ENCODE measurements at regions of chr18 and their contacts with region 1.

Region 1: GRCh38 chr18:24987303-24988252 is 364.4 kb downstream of the ZNF521 start:
- DNase-seq: peak; percentile 64 to 89
- ATAC-seq: peak; percentile 88 to 93 (median 88)
- H3K4me3 ChIP-seq: peak overlapping the region; percentile 54
- H3K27ac ChIP-seq: peak overlapping the region; percentile 86
- H3K4me1 ChIP-seq: peaks cover 73% of the 10 kb centered on the region
- H3K27me3 ChIP-seq: no peaks in the 10 kb centered on the region
- CTCF ChIP-seq: no peak

Region 2: DNA sequence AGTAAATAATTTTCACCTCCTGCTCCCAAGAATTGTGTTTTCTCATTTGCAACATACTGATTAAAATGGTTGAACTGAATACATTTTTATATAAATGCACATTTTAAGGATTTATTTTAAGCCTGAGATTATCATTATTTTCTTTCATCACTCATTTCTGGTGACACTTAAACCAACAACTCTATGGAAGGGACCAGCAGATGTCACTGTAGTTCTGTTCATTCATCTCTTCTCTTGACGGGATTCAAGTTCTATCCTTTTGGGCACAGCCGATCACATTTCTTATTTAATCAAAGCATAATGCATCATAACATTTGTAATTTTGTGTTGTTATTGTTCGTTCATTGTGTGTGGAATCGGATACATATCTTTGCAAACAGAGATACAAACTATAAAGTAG is 109.3 kb before region 1 on chr18:
- intact Hi-C with region 1: no loop called
- DNase-seq: no peak
- ATAC-seq: peak in 3 of 4 donors; percentile 62 to 80 (median 68)
- H3K4me3 ChIP-seq: no peak overlapping the region
- H3K27ac ChIP-seq: no peak overlapping the region
- H3K4me1 ChIP-seq: no peaks in the 10 kb centered on the region
- H3K27me3 ChIP-seq: no peaks in the 10 kb centered on the region
- CTCF ChIP-seq: peak; percentile 72

Region 3: DNA sequence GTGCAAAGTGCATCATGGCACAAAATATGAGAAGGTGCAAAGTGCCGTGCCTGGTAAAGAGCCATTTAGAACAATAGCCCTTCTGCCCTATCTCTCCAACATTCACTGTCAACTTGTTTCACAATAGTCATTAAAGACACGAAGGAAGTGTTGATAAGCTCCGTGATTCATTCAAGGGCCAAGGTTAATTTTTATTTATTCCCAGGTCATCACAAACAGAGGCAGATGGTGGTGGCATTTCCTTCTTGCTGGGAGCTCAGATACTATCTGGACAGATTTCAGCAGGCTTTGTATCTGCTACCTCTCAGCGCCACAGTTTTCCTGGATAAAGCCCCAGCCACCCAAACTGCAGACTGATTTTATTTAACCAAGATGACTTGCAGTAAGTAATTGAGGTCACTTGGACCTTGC is 55.1 kb after region 1 on chr18:
- intact Hi-C with region 1: no loop called
- DNase-seq: no peak
- ATAC-seq: peak in 2 of 4 donors; percentile 80 to 82
- H3K4me3 ChIP-seq: no peak overlapping the region
- H3K27ac ChIP-seq: no peak overlapping the region
- H3K4me1 ChIP-seq: peaks cover 5% of the 10 kb centered on the region
- H3K27me3 ChIP-seq: no peaks in the 10 kb centered on the region
- CTCF ChIP-seq: no peak

Region 4: DNA sequence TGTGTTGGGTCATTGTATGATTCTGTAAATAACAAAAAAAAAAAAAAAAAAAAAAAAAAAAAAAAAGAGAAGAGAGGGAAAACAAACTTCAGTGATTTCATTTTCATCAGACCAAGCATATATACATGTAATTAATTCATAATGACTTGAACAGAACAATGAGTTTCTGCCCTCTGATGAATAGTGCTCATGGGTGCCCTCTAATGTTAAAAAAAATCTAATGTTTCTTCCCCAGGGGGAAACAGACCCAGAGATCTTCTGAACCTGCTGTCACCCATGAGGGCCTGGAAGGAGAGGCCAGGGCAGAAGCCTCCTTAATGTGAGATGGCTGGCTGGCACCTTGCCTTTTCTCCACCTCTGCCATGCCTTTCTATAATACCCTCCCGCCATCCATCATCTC is 75.1 kb after region 1 on chr18:
- intact Hi-C with region 1: loop called in 1 of 2 experiments (anchors 5 kb)
- DNase-seq: no peak
- ATAC-seq: peak in 1 of 4 donors; percentile 58
- H3K4me3 ChIP-seq: no peak overlapping the region
- H3K27ac ChIP-seq: no peak overlapping the region
- H3K4me1 ChIP-seq: no peaks in the 10 kb centered on the region
- H3K27me3 ChIP-seq: no peaks in the 10 kb centered on the region
- CTCF ChIP-seq: no peak

Region 5: GRCh38 chr18:25136416-25137196 is 149.0 kb after region 1 on chr18:
- intact Hi-C with region 1: loop called in 1 of 2 experiments (anchors 10 kb)
- DNase-seq: no peak
- ATAC-seq: peak in 2 of 4 donors; percentile 10 to 45
- H3K4me3 ChIP-seq: no peak overlapping the region
- H3K27ac ChIP-seq: no peak overlapping the region
- H3K4me1 ChIP-seq: peaks cover 35% of the 10 kb centered on the region
- H3K27me3 ChIP-seq: no peaks in the 10 kb centered on the region
- CTCF ChIP-seq: no peak

Region 6: GRCh38 chr18:25230658-25231326 is 243.2 kb after region 1 on chr18:
- intact Hi-C with region 1: loop called (anchors 5 to 10 kb)
- DNase-seq: peak; percentile 76 to 81
- ATAC-seq: peak; percentile 81 to 95 (median 90)
- H3K4me3 ChIP-seq: peak overlapping the region; percentile 41
- H3K27ac ChIP-seq: peak overlapping the region; percentile 72
- H3K4me1 ChIP-seq: peaks cover 24% of the 10 kb centered on the region
- H3K27me3 ChIP-seq: no peaks in the 10 kb centered on the region
- CTCF ChIP-seq: no peak

Region 7: DNA sequence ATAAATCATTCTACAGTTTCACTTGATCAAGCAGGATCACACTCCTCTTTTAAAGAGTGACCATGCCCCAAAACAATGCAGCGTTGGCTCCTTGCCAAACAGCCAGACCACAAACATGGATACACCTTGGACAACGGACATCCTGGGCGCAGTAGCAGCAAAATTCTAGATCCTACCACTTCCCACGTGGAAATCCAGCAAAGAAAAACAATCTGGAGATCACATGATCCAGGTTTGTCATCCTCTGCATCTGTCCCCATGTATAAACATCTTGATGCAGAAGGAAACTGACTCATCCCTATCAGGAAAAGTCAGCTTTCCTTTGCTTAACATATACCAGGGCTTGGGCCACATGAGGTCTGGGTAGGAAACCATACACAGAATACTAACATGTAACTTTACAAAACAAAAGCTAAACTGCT is 311.3 kb after region 1 on chr18:
- intact Hi-C with region 1: loop called in 1 of 2 experiments (anchors 10 kb)
- DNase-seq: peak; percentile 65 to 74
- ATAC-seq: peak; percentile 92 to 95 (median 92)
- H3K4me3 ChIP-seq: no peak overlapping the region
- H3K27ac ChIP-seq: peak overlapping the region; percentile 82
- H3K4me1 ChIP-seq: peaks cover 23% of the 10 kb centered on the region
- H3K27me3 ChIP-seq: no peaks in the 10 kb centered on the region
- CTCF ChIP-seq: no peak

Region 8: GRCh38 chr18:25467226-25467987 is 479.8 kb after region 1 on chr18:
- intact Hi-C with region 1: loop called in 1 of 2 experiments (anchors 10 kb)
- DNase-seq: peak; percentile 84 to 93
- ATAC-seq: peak; percentile 98 to 100 (median 99)
- H3K4me3 ChIP-seq: peak overlapping the region; percentile 26
- H3K27ac ChIP-seq: peak overlapping the region; percentile 83
- H3K4me1 ChIP-seq: peaks cover 35% of the 10 kb centered on the region
- H3K27me3 ChIP-seq: no peaks in the 10 kb centered on the region
- CTCF ChIP-seq: no peak

Region 9: GRCh38 chr18:25832001-25832604 is 844.5 kb after region 1 on chr18:
- intact Hi-C with region 1: loop called in 1 of 2 experiments (anchors 5 kb)
- DNase-seq: peak; percentile 61 to 71
- ATAC-seq: peak; percentile 86 to 93 (median 87)
- H3K4me3 ChIP-seq: no peak overlapping the region
- H3K27ac ChIP-seq: no peak overlapping the region
- H3K4me1 ChIP-seq: no peaks in the 10 kb centered on the region
- H3K27me3 ChIP-seq: no peaks in the 10 kb centered on the region
- CTCF ChIP-seq: peak; percentile 75

Measured in psoas muscle (tissue), 8 donors.